Activated CD4-positive, alpha-beta memory T cell treated with anti-CD3 and anti-CD28 coated beads, Interleukin-2, amount 10 ng/mL, durations not matched to agents 7 days and 5 days (primary cell): ENCODE measurements at regions of chr12 and their contacts with region 1.

Region 1: DNA sequence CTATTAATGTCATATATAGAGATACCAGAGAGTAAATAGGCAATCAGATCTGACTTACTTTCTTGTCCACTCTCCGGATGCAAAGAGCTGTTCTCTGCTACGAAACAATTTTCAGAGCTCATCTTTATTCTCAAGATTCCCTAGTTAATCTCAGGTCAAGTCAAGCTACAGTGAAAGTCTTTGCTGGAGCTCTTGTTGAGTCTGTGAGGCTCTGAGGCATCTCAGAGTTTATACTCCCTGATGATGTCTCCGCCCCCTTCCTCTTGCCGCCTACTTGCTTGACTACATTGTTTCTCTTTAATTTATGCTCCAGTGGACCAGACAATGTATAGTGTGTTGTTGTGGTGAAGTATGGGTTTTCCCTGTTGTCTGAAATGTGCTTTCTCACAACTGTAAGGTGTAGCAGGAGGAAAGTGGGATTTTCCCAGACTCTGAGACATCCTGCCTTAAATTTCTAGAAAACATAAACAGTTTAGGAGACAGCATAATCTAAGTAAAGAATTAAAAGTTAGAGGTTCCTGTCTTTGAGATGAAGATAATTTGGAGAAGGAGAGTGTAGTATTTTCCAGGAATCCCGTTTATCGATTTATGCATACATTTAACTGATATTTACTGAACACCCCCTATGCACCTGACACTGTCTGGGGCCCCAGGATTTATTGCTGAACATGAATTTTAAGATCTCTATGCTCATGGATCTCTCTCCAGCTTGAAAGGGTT is at the start of gene CD69:
- DNase-seq: peak; percentile 88
- H3K4me3 Mint-ChIP-seq: peak within 1 kb of the TSS; percentile 99
- H3K27ac Mint-ChIP-seq: peak within 1 kb of the TSS; percentile 86
- H3K4me1 Mint-ChIP-seq: peaks cover 53% of the 10 kb centered on the region
- H3K27me3 Mint-ChIP-seq: no peaks in the 10 kb centered on the region
- total RNA-seq, gene CD69: 196 to 197 TPM

Region 2: DNA sequence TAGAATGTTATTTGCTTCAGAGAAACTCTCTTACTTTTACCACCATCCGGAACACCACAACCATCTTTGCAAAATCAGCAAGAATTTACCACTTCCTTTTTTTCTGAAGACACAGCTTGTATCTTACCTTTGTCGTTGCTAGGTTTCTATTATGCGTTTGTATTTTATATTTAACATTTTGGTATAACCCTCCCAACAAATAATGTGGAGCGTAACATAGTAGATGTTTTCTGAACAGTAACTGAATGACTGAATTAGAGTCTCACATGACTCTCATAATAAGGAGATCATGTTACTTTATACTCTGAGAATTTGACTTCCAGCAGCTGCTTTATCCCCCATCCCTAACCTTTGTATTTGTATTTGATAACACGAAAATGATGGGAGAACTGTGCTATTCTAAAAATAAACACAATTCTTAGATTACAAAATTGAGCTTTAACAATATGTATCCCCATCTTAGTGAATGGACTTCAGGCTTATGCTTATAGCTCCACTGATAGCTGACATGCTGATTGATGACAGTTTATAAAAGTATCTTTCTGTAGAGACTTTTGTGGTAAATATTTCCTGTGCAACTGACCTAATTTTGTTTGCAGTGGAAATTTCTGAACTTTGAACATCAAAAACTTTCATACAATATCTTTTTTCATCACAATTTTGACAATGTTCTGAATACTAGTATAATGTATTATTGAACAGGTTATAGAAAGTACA is 145.3 kb before region 1 on chr12:
- CTCF ChIA-PET with region 1: no interaction called
- POLR2A ChIA-PET with region 1: interaction called, 15 read pairs
- DNase-seq: peak; percentile 23
- H3K4me3 Mint-ChIP-seq: peak overlapping the region; percentile 65
- H3K27ac Mint-ChIP-seq: peak overlapping the region; percentile 94
- H3K4me1 Mint-ChIP-seq: peaks cover 66% of the 10 kb centered on the region
- H3K27me3 Mint-ChIP-seq: no peaks in the 10 kb centered on the region

Region 3: GRCh38 chr12:9702255-9702654 is 58.6 kb before region 1 on chr12:
- CTCF ChIA-PET with region 1: no interaction called
- POLR2A ChIA-PET with region 1: no interaction called
- DNase-seq: peak; percentile 75
- H3K4me3 Mint-ChIP-seq: peak overlapping the region; percentile 43
- H3K27ac Mint-ChIP-seq: peak overlapping the region; percentile 85
- H3K4me1 Mint-ChIP-seq: peaks cover 72% of the 10 kb centered on the region
- H3K27me3 Mint-ChIP-seq: no peaks in the 10 kb centered on the region

Region 4: GRCh38 chr12:9732921-9733461 is 27.9 kb before region 1 on chr12 and contains the start of gene CLECL1:
- CTCF ChIA-PET with region 1: no interaction called
- POLR2A ChIA-PET with region 1: interaction called, 19 read pairs
- DNase-seq: no peak
- H3K4me3 Mint-ChIP-seq: peak within 1 kb of the TSS; percentile 92
- H3K27ac Mint-ChIP-seq: peak within 1 kb of the TSS; percentile 94
- H3K4me1 Mint-ChIP-seq: peaks cover 62% of the 10 kb centered on the region
- H3K27me3 Mint-ChIP-seq: peaks cover 2% of the 10 kb centered on the region
- total RNA-seq, gene CLECL1: 13.5 to 15.4 TPM

Region 5: GRCh38 chr12:9750276-9751203 is 10.3 kb before region 1 on chr12:
- CTCF ChIA-PET with region 1: interaction called, 93 read pairs
- POLR2A ChIA-PET with region 1: interaction called, 107 read pairs
- DNase-seq: peak; percentile 61
- H3K4me3 Mint-ChIP-seq: peak overlapping the region; percentile 15
- H3K27ac Mint-ChIP-seq: peak overlapping the region; percentile 5
- H3K4me1 Mint-ChIP-seq: peaks cover 55% of the 10 kb centered on the region
- H3K27me3 Mint-ChIP-seq: no peaks in the 10 kb centered on the region

Region 6: DNA sequence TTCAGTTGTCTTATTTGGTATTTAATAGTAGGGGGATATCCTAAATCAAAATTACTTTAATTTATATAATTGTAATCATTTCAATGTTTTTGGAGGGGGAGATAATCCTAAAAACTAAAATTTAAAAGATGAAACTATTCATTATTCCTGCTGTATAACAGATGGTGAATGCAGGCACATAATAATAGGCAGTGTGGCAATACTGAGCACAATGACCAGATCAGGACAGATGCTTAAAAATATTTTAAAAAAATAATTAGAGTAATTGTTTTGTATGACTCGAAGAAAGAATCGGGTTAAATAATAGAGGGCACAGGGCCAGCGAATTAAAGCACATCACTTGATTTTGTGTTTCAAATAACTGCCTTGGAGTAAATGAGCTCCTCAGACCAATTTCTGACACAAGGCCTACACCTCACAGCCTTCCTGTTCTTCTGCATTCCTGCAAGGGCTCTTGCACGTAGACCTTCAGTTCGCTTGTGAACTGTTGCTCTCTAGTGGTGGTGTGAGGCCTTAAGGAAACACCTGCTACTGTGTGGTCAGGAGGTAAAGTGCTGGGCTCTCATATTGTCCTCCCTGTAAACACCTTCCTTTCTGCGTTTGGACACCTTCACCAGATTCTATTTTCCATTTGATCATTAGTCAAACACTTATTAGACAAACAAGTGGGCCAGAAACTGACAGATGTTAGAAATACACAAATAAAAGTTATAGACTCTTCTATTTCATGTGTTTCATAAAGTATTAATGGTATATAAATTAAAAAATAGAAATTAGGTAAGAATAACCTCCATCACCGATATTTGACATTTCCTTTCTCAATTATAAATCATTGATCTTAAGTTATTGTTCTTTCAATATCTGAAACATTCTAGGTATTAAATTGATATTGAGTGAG is 37.1 kb after region 1 on chr12:
- CTCF ChIA-PET with region 1: interaction called, 587 read pairs
- POLR2A ChIA-PET with region 1: interaction called, 812 read pairs
- DNase-seq: peak; percentile 76
- H3K4me3 Mint-ChIP-seq: no peak overlapping the region
- H3K27ac Mint-ChIP-seq: peak overlapping the region; percentile 92
- H3K4me1 Mint-ChIP-seq: peaks cover 47% of the 10 kb centered on the region
- H3K27me3 Mint-ChIP-seq: peaks cover 15% of the 10 kb centered on the region

Region 7: GRCh38 chr12:9869307-9870161 is 108.7 kb after region 1 on chr12 and contains the start of gene CLEC2B:
- CTCF ChIA-PET with region 1: interaction called, 3 read pairs
- POLR2A ChIA-PET with region 1: interaction called, 298 read pairs
- DNase-seq: no peak
- H3K4me3 Mint-ChIP-seq: peak within 1 kb of the TSS; percentile 85
- H3K27ac Mint-ChIP-seq: peak within 1 kb of the TSS; percentile 92
- H3K4me1 Mint-ChIP-seq: peaks cover 19% of the 10 kb centered on the region
- H3K27me3 Mint-ChIP-seq: no peaks in the 10 kb centered on the region
- total RNA-seq, gene CLEC2B: 79.6 to 79.7 TPM